ENCODE measurements at regions of chr16 and their contacts with region 1.

Region 1: DNA sequence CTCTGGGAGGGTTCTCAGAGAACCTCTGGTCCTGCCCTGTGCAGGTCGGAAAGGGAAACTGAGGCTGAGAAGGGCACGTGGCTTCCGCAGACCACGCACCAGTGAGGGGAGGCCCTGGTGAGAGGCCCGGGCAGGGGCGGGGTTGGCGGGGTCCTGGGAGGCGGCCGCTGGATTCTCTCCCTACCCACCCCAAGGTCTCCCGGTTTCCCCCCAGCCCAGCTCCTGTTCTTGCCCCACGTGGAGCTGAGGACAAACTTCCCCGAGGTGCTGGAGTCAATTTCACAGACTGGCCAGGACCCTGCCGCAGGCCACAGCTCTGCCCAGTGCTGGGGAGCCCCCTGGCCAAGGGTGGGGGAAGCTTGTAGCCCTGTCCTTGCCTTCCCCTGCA is 11.5 kb downstream of the CCL17 start:
- DNase-seq: no peak
- H3K4me3 ChIP-seq: no peak overlapping the region
- H3K27ac ChIP-seq: no peak overlapping the region
- H3K4me1 ChIP-seq: peaks cover 0 to 37% of the 10 kb centered on the region in 2 experiments; a peak in 2 of 4 replicates
- H3K27me3 ChIP-seq: no peaks in the 10 kb centered on the region
- CTCF ChIP-seq: no peak
- EP300 ChIP-seq: no peak
- RAD21 ChIP-seq: no peak

Region 2: GRCh38 chr16:57091975-57092785 is 323.9 kb before region 1 on chr16 and contains the start of gene CPNE2:
- CTCF ChIA-PET with region 1: interaction called, 19 read pairs
- POLR2A ChIA-PET with region 1: no interaction called
- DNase-seq: peak; percentile 95
- H3K4me3 ChIP-seq: peak within 1 kb of the TSS; percentile 75 to 81
- H3K27ac ChIP-seq: peak within 1 kb of the TSS; percentile 36 to 51; a peak in 2 of 4 replicates
- H3K4me1 ChIP-seq: peaks cover 12 to 25% of the 10 kb centered on the region in 2 experiments; a peak in 1 of 4 replicates
- H3K27me3 ChIP-seq: no peaks in the 10 kb centered on the region
- CTCF ChIP-seq: no peak; the same call in 1 of the 2 replicates
- EP300 ChIP-seq: no peak
- RAD21 ChIP-seq: no peak
- polyA plus RNA-seq, gene CPNE2: 63.8 and 73.0 TPM in 2 replicates

Region 3: DNA sequence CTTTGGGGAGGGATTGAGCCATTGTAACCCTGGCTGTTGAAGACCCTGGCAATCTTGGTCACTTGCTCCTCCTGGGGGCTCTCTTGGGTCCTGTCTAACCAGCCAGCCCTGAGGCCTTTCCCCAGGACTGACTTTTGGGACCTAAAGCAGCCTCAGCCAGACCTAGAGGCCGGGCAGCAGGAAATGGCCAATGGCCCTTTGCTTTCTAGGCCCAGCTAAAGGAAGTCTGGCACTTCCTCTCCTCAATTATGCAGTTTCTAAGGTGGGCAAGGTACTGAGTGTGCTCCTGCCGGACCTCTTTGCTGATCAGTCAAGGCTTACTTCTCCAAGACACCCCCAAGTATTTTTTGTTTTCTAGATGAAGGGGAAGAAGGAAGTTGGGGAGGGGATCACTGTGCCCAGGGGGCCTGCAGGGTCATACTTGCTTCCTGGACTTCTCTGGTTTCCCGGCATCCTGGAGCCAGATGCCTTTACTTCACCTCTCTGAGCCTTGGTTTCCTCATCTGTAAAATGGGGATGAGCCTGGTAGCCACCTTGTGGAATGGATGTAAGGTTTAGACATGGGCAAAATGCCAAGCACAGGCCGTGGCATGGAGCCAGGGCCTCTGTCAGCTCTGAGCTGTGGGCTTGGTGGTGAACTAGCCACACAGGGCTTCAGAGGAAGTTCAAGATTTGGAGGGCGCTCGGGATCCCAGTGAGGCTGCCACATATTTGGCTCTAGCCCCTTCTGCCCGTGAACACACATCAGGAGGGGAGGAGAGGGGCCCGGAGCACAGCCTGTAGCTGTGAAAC is 35.2 kb before region 1 on chr16:
- CTCF ChIA-PET with region 1: interaction called, 97 read pairs
- POLR2A ChIA-PET with region 1: interaction called, 4 read pairs
- DNase-seq: no peak
- H3K4me3 ChIP-seq: no peak overlapping the region
- H3K27ac ChIP-seq: no peak overlapping the region
- H3K4me1 ChIP-seq: peaks cover 15 to 35% of the 10 kb centered on the region in 2 experiments; a peak in 3 of 4 replicates
- H3K27me3 ChIP-seq: no peaks in the 10 kb centered on the region
- CTCF ChIP-seq: no peak
- EP300 ChIP-seq: no peak
- RAD21 ChIP-seq: no peak

Region 4: GRCh38 chr16:57432989-57433388 is 16.9 kb after region 1 on chr16:
- CTCF ChIA-PET with region 1: interaction called, 30 read pairs
- POLR2A ChIA-PET with region 1: no interaction called
- DNase-seq: no peak
- H3K4me3 ChIP-seq: no peak overlapping the region
- H3K27ac ChIP-seq: no peak overlapping the region
- H3K4me1 ChIP-seq: no peaks in the 10 kb centered on the region
- H3K27me3 ChIP-seq: no peaks in the 10 kb centered on the region
- CTCF ChIP-seq: no peak
- EP300 ChIP-seq: no peak
- RAD21 ChIP-seq: no peak

Region 5: GRCh38 chr16:57462209-57462977 is 46.3 kb after region 1 on chr16 and contains the start of gene POLR2C:
- CTCF ChIA-PET with region 1: interaction called, 49 read pairs
- POLR2A ChIA-PET with region 1: no interaction called
- DNase-seq: peak; percentile 92
- H3K4me3 ChIP-seq: peak within 1 kb of the TSS; percentile 72 to 97
- H3K27ac ChIP-seq: peak within 1 kb of the TSS; percentile 12 to 89; a peak in 2 of 4 replicates
- H3K4me1 ChIP-seq: peaks cover 8 to 13% of the 10 kb centered on the region in 2 experiments; a peak in 1 of 4 replicates
- H3K27me3 ChIP-seq: no peaks in the 10 kb centered on the region
- CTCF ChIP-seq: peak; percentile 85
- EP300 ChIP-seq: no peak; a peak in 1 of 4 replicates
- RAD21 ChIP-seq: peak; percentile 49
- polyA plus RNA-seq, gene POLR2C: 160 and 178 TPM in 2 replicates

Region 6: DNA sequence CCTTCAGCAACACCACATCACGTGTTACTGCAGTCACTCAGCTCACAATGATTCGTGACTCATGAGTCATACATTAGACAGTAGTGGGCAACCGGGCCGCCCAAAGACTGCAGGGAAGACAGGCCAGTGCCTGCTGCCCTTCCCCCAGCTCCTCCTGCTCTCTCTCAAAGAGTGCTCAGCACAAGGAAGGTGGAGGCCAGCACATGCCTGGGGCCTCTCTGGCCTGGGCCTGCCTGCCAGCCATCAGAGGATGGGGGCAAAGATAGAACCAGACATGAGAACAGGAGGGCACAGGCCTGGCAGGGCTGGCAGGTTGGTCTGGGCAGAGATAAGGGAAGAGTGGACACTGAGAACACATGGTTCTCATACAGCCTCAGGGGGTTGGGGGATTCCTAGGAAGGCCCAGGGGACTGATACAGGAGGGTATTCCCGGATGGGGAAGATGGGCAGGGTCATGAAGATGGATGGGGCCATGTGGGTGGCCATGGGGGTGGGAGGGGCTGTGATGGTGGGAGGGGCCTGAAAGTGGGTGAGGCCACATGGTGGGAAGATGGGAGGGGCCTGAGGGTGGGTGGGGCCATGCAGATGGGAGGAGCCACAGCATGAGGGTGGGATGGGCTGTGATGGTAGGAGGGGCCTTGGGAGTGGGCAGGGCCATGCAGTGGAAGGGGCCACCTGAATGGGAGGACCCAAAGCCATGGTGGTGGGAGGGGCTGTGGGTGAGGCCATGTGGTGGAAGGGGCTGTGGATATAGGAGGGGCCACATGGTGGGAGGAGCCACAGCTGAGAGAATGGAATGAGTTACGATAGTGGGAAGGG is 348.4 kb after region 1 on chr16:
- CTCF ChIA-PET with region 1: no interaction called
- POLR2A ChIA-PET with region 1: no interaction called
- DNase-seq: peak; percentile 93
- H3K4me3 ChIP-seq: no peak overlapping the region
- H3K27ac ChIP-seq: peak overlapping the region; percentile 56 to 93
- H3K4me1 ChIP-seq: peaks cover 4 to 16% of the 10 kb centered on the region in 2 experiments; a peak in 3 of 4 replicates
- H3K27me3 ChIP-seq: no peaks in the 10 kb centered on the region
- CTCF ChIP-seq: no peak
- EP300 ChIP-seq: peak in 1 of 2 experiments; percentile 69; a peak in 3 of 4 replicates
- RAD21 ChIP-seq: 0 out of 2 replicates have a peak, but pooled peaks have one; percentile 11

Region 7: GRCh38 chr16:57893559-57894389 is 477.7 kb after region 1 on chr16:
- CTCF ChIA-PET with region 1: no interaction called
- POLR2A ChIA-PET with region 1: no interaction called
- DNase-seq: no peak
- H3K4me3 ChIP-seq: no peak overlapping the region
- H3K27ac ChIP-seq: no peak overlapping the region
- H3K4me1 ChIP-seq: peaks cover 6 to 8% of the 10 kb centered on the region in 2 experiments; a peak in 2 of 4 replicates
- H3K27me3 ChIP-seq: no peaks in the 10 kb centered on the region
- CTCF ChIP-seq: no peak
- EP300 ChIP-seq: no peak
- RAD21 ChIP-seq: no peak

Measured in SK-N-SH (cell line).